ENCODE measurements at regions of chr19 and their contacts with region 1.

Region 1: DNA sequence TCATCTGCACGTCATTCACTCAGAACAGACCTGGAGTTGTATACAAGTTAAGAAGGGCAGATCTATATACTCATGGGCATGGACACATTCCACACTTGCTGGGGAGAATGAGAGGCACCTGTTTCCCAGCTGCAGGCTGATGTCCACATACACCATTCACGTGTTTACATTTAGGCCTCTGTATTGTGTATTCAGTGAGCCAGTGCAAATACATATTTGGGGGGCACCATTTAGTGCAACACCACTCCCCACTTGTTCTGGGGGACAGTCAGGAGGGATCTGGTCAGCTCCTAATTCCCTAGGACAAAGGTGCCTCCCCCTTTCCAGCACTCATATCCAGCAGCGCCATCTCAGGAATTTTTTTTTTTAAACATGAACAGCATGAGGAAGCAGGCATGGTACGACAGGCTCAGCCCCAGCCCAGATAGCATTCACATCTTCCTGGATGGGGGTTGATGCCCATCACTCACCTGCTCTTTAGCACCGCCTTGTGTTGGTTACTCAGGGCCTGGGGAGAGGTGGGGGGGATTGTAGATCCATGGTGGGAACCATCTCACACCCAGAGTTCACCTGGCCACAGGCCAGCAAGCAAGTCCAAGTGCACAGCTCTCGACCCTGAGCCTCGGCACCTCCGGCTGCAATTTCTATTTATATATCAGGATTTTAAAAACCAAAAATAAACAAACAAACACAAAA is 56.9 kb upstream of the ZNF254 start:
- DNase-seq: no peak
- H3K4me3 ChIP-seq: no peak overlapping the region
- H3K27ac ChIP-seq: no peak overlapping the region
- H3K4me1 ChIP-seq: peaks cover 0 to 4% of the 10 kb centered on the region in 2 donors
- H3K27me3 ChIP-seq: no peaks in the 10 kb centered on the region
- CTCF ChIP-seq: no peak
- POLR2A ChIP-seq: no peak

Region 2: DNA sequence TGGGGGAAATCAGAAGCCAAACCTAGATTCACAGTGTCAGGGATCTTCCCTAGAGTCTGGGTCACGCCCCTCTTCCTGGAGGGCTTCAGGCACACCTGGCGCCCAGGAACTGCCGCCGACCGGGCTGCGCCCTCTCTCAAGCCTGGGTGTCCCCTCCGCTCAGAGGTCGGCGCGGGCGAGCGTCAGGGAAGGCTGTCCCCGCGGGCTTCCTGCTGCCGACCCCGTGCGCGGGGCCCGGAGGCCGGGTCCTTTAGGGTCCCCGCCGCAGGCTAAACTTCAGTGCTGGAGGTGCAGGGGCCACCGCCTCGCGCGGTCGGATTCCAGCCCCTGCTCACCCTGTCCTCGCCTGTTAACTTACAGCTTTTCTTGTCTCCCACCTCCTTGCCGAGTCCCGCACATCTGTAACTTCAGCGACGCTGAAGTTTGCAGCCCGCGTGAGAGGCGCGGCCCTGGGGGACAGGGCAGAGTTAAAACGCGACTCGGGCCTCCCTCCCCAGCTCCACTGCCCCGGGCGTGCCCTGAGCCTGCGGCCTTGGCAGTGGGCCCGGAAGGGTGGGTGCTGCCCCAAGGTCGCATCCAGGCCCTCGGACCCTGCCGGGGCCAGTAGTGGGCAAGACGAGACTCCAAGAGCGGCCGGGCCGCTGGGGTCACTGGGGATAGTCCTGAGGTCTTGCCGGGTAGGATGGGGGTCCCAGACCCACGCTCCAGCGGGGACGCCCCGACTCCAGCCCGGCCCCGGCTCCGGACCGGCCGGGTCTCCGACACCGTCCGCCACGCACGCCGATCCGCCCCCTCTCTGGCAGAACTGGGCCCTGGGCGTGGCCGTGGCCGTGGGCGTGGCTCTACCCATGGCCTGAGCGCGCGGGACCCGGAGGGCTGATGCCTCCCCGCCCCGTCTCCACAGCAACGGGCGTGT is 1512.3 kb before region 1 on chr19:
- intact Hi-C with region 1: no loop called
- DNase-seq: no peak
- H3K4me3 ChIP-seq: peak overlapping the region in 2 of 3 donors; percentile 35 to 42
- H3K27ac ChIP-seq: no peak overlapping the region
- H3K4me1 ChIP-seq: no peaks in the 10 kb centered on the region
- H3K27me3 ChIP-seq: no peaks in the 10 kb centered on the region
- CTCF ChIP-seq: no peak
- POLR2A ChIP-seq: no peak

Region 3: DNA sequence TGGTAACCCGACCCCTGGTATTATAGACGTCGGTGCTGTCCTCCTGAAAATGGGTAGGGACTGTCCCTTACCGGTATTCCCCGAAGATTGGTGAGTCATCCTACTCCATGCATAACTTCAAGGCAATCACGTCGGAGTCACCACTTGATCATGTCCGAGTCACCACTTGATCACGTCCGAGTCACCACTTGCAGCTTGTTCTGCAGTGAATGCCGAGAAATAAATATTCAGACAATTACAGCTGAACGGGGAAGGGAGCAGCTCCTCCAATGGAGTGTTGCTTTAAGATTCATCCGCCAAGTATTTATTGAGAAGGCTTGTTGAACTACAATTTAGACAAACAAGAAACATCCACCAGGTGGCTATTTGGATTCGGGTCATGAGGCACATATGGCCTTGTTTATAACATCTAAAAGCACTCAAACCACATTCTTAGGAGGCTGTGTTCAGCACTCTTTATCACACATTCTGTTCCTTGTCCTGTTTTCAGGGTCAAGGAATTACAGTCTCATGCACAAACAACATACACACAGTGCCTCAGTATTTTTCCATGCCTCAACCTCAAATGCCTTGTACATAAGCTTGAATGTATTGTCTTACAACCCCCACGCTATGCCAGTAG is 72.3 kb before region 1 on chr19:
- intact Hi-C with region 1: no loop called
- DNase-seq: no peak
- H3K4me3 ChIP-seq: peak overlapping the region in 2 of 3 donors; percentile 43 to 55
- H3K27ac ChIP-seq: peak overlapping the region in 1 of 2 donors; percentile 38
- H3K4me1 ChIP-seq: no peaks in the 10 kb centered on the region
- H3K27me3 ChIP-seq: no peaks in the 10 kb centered on the region
- CTCF ChIP-seq: no peak
- POLR2A ChIP-seq: no peak

Region 4: DNA sequence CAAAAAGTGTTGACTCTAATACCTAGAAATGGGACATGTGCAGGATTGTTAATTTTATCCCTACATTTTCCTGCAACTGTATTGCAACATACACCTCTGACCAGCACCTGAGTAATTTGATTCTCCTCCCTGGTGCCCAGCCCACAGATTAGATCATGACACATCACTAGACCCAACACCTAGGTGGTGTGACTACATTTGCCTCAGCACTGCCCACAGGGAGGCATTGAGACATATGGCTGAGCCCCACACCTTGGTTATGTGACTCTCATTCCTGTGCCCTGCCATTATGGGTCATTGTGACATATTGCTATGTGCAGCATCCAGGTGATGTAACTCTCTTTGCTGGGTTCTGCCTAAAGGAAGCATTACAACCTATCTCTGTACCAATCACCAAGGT is 43.7 kb after region 1 on chr19:
- intact Hi-C with region 1: loop called (anchors 2 kb)
- DNase-seq: no peak
- H3K4me3 ChIP-seq: no peak overlapping the region
- H3K27ac ChIP-seq: no peak overlapping the region
- H3K4me1 ChIP-seq: no peaks in the 10 kb centered on the region
- H3K27me3 ChIP-seq: no peaks in the 10 kb centered on the region
- CTCF ChIP-seq: no peak
- POLR2A ChIP-seq: no peak